ENCODE measurements at regions of chr6 and their contacts with region 1.

Region 1: DNA sequence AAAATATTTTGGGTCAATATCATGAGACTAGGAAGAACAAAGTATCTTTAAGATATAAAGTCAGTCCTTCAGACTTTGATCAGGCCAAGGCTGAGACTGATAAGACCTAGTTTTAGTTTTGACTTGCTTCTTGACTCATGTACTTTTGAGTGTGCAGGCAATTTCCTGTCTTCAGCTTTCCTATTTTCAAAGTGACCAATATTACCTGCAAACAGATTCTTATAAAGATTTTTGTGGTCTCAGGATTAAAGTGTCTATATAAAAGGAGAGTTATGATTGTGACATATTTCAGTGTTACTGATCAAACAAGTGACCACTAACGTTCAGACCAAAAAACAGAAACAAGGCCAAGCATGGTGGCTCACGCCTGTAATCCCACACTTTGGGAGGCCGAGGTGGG is 36.0 kb upstream of the AKIRIN2 start:
- DNase-seq: no peak
- H3K4me3 ChIP-seq: no peak overlapping the region
- H3K27ac ChIP-seq: no peak overlapping the region
- H3K4me1 ChIP-seq: peaks cover 2% of the 10 kb centered on the region; the same call in 1 of the 2 replicates
- H3K27me3 ChIP-seq: no peaks in the 10 kb centered on the region
- CTCF ChIP-seq: no peak

Region 2: GRCh38 chr6:87687296-87687695 is 50.7 kb before region 1 on chr6:
- CTCF ChIA-PET with region 1: no interaction called
- POLR2A ChIA-PET with region 1: interaction called, 10 read pairs
- intact Hi-C with region 1: no loop called
- DNase-seq: no peak
- H3K4me3 ChIP-seq: no peak overlapping the region
- H3K27ac ChIP-seq: no peak overlapping the region
- H3K4me1 ChIP-seq: no peaks in the 10 kb centered on the region
- H3K27me3 ChIP-seq: no peaks in the 10 kb centered on the region
- CTCF ChIP-seq: no peak